ENCODE measurements at regions of chr12 and their contacts with region 1.

Region 1: DNA sequence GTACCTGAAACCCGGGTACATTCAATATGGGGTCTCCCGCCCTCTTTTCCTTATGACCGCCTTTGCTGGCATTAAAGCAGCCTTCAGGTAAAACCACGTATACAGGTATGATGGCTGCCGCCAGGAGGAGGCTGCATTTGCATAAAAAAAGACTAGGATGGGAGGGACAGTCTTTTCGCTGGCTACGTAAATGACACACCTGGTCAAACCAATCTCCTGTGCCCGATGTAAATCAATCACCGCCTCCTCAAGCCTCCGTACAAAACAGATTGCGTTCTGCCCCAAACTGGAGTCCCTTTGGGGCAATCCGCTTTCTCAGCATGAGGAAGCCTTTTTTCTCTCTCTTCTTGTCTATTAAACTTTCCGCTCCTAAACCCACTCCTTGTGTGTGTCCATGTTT is 8.1 kb upstream of the ALDH1L2 start:
- DNase-seq: peak; percentile 75
- ATAC-seq: peak; percentile 93
- H3K4me3 Mint-ChIP-seq: peak overlapping the region; percentile 58
- H3K27ac Mint-ChIP-seq: peak overlapping the region; percentile 100
- H3K4me1 Mint-ChIP-seq: peaks cover 35% of the 10 kb centered on the region
- H3K27me3 Mint-ChIP-seq: peaks cover 2% of the 10 kb centered on the region; the same call in 1 of the 2 replicates
- CTCF ChIP-seq: no peak

Region 2: GRCh38 chr12:105067511-105068031 is 24.8 kb before region 1 on chr12:
- CTCF ChIA-PET with region 1: no interaction called
- POLR2A ChIA-PET with region 1: no interaction called
- DNase-seq: no peak
- ATAC-seq: no peak
- H3K4me3 Mint-ChIP-seq: no peak overlapping the region
- H3K27ac Mint-ChIP-seq: 0 out of 2 replicates have a peak overlapping the region, but pooled peaks have one; percentile 18
- H3K4me1 Mint-ChIP-seq: peaks cover 18% of the 10 kb centered on the region
- H3K27me3 Mint-ChIP-seq: no peaks in the 10 kb centered on the region
- CTCF ChIP-seq: no peak

Region 3: GRCh38 chr12:105109465-105110212 is 17.3 kb after region 1 on chr12:
- CTCF ChIA-PET with region 1: interaction called, 3 read pairs
- POLR2A ChIA-PET with region 1: interaction called, 14 read pairs
- DNase-seq: no peak
- ATAC-seq: no peak
- H3K4me3 Mint-ChIP-seq: peak overlapping the region; percentile 96
- H3K27ac Mint-ChIP-seq: peak overlapping the region; percentile 85
- H3K4me1 Mint-ChIP-seq: peaks cover 64% of the 10 kb centered on the region
- H3K27me3 Mint-ChIP-seq: peaks cover 9% of the 10 kb centered on the region
- CTCF ChIP-seq: no peak